GM12878 (cell line): ENCODE measurements at regions of chr2 and their contacts with region 1.

Region 1: GRCh38 chr2:33205693-33206434 is 259.1 kb downstream of the LTBP1 start:
- DNase-seq: peak; percentile 73
- ATAC-seq: peak; percentile 98
- H3K4me3 ChIP-seq: no peak overlapping the region; the same call in 1 of the 2 replicates
- H3K27ac ChIP-seq: no peak overlapping the region
- H3K4me1 ChIP-seq: peaks cover 15% of the 10 kb centered on the region
- H3K27me3 ChIP-seq: no peaks in the 10 kb centered on the region
- CTCF ChIP-seq: no peak
- EP300 ChIP-seq: peak; percentile 16 to 22; a peak in 1 of 4 replicates
- POLR2A ChIP-seq: no peak
- RAD21 ChIP-seq: no peak

Region 2: DNA sequence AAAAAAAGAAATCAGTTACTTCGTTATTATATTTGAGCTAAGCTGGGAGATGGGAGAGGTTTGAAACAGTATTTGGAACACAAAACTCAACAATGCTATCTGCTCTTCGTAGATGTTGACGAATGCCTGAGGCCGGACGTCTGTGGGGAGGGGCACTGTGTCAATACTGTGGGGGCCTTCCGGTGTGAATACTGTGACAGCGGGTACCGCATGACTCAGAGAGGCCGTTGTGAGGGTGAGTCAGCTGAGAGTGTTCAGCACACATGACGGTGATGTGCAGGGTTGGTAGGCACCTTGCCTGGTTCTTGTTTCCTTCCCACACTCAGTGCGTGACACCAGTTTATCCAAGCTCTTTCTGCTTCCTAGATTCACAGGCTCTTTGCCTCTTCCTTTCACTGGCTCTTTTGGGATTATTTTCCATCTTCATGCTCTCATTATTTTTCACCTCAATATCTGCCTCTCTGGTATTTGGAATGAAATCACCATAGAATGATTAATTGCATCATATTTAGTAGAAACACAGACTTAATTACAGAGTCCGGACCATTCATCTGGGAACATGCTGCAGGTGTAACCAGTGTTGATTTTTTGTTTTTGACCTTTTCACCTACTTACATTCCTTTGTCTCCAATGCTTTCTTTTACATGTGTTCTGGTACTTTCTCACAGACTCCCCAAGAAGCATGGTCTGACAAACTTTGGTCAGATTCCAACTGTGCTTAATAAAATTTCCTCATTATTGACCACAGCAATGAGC is 70.0 kb after region 1 on chr2:
- CTCF ChIA-PET with region 1: interaction called, 3 read pairs
- POLR2A ChIA-PET with region 1: no interaction called
- RAD21 ChIA-PET with region 1: no interaction called
- SMC1A ChIA-PET with region 1: no interaction called
- in situ Hi-C with region 1: no loop called
- intact Hi-C with region 1: loop called (anchors 5 kb)
- DNase-seq: no peak
- ATAC-seq: no peak
- H3K4me3 ChIP-seq: no peak overlapping the region
- H3K27ac ChIP-seq: no peak overlapping the region
- H3K4me1 ChIP-seq: peaks cover 10% of the 10 kb centered on the region
- H3K27me3 ChIP-seq: 0 out of 4 replicates have a peak, but pooled peaks cover 0 to 2% of the 10 kb centered on the region in 2 experiments
- CTCF ChIP-seq: no peak
- EP300 ChIP-seq: no peak
- POLR2A ChIP-seq: no peak
- RAD21 ChIP-seq: no peak